ENCODE measurements at regions of chr18 and their contacts with region 1.

Region 1: GRCh38 chr18:59208602-59209125 is 11.3 kb upstream of the GRP start:
- DNase-seq: peak; percentile 84
- H3K4me3 ChIP-seq: no peak overlapping the region
- H3K27ac ChIP-seq: peak overlapping the region; percentile 89
- H3K4me1 ChIP-seq: peaks cover 52% of the 10 kb centered on the region
- H3K27me3 ChIP-seq: no peaks in the 10 kb centered on the region
- CTCF ChIP-seq: no peak

Region 2: DNA sequence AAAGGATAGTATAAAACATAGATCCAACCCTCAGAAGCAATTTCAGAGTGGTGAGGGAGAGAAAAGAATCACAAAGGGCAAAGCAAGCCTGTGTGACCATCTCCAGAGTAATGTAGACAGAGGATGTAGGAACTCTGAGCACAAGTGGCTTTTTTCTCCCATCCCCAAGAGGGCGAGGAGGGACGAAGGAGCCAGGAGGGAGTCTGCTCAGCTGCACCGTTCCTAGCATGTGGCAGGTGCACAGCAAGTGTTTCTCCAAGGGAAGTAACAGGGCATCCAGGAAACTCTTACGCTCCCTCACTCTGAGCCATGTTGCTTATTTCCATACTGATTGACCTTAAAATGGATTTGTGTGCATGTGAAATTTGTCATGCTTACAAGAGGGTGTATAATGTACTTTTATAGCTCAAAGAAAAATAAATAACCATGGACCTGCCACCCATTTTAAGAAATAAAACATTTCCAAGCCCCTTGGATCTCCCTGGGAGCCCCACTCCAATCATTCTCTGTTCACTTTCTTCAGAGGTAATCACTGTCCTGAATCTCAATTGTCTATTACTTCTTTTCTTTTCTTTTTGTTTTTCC is 106.7 kb before region 1 on chr18:
- CTCF ChIA-PET with region 1: no interaction called
- POLR2A ChIA-PET with region 1: interaction called, 3 read pairs
- intact Hi-C with region 1: loop called (anchors 1 kb)
- DNase-seq: peak; percentile 95
- H3K4me3 ChIP-seq: no peak overlapping the region
- H3K27ac ChIP-seq: peak overlapping the region; percentile 98
- H3K4me1 ChIP-seq: peaks cover 31% of the 10 kb centered on the region
- H3K27me3 ChIP-seq: no peaks in the 10 kb centered on the region
- CTCF ChIP-seq: no peak

Region 3: GRCh38 chr18:59139371-59140298 is 69.0 kb before region 1 on chr18 and contains the start of gene SEC11C:
- CTCF ChIA-PET with region 1: no interaction called
- POLR2A ChIA-PET with region 1: no interaction called
- intact Hi-C with region 1: loop called (anchors 5 kb)
- DNase-seq: peak; percentile 99
- H3K4me3 ChIP-seq: peak within 1 kb of the TSS; percentile 89
- H3K27ac ChIP-seq: peak within 1 kb of the TSS; percentile 93
- H3K4me1 ChIP-seq: peaks cover 33% of the 10 kb centered on the region
- H3K27me3 ChIP-seq: no peaks in the 10 kb centered on the region
- CTCF ChIP-seq: no peak
- total RNA-seq, gene SEC11C: 300 and 355 TPM in 2 replicates

Region 4: GRCh38 chr18:59265246-59265973 is 56.7 kb after region 1 on chr18:
- CTCF ChIA-PET with region 1: no interaction called
- POLR2A ChIA-PET with region 1: no interaction called
- intact Hi-C with region 1: no loop called
- DNase-seq: peak; percentile 92
- H3K4me3 ChIP-seq: peak overlapping the region; percentile 62
- H3K27ac ChIP-seq: no peak overlapping the region
- H3K4me1 ChIP-seq: peaks cover 46% of the 10 kb centered on the region
- H3K27me3 ChIP-seq: peaks cover 10% of the 10 kb centered on the region
- CTCF ChIP-seq: no peak

Measured in A673 (cell line).